CD4-positive, alpha-beta memory T cell (primary cell): ENCODE measurements at regions of chr1 and their contacts with region 1.

Region 1: GRCh38 chr1:158998781-158999161 is 10.9 kb upstream of the IFI16 start:
- DNase-seq: peak; percentile 63 to 72 (median 71)
- H3K4me3 ChIP-seq: no peak overlapping the region
- H3K4me3 Mint-ChIP-seq: peak overlapping the region in 7 of 8 donors; percentile 64 to 89 (median 76)
- H3K27ac ChIP-seq: no peak overlapping the region
- H3K27ac Mint-ChIP-seq: peak overlapping the region in 5 of 7 donors; percentile 24 to 93 (median 93)
- H3K4me1 ChIP-seq: peaks cover 33% of the 10 kb centered on the region
- H3K4me1 Mint-ChIP-seq: peaks cover 32 to 42% (median 37%) of the 10 kb centered on the region in 4 donors
- H3K27me3 ChIP-seq: no peaks in the 10 kb centered on the region
- H3K27me3 Mint-ChIP-seq: no peaks in the 10 kb centered on the region

Region 2: GRCh38 chr1:158506369-158506987 is 492.3 kb before region 1 on chr1:
- CTCF ChIA-PET with region 1: interaction called, 6 read pairs
- POLR2A ChIA-PET with region 1: no interaction called
- intact Hi-C with region 1: loop called (anchors 1 kb)
- DNase-seq: peak in 4 of 5 donors; percentile 18 to 35 (median 24)
- H3K4me3 ChIP-seq: no peak overlapping the region
- H3K4me3 Mint-ChIP-seq: no peak overlapping the region
- H3K27ac ChIP-seq: no peak overlapping the region
- H3K27ac Mint-ChIP-seq: no peak overlapping the region
- H3K4me1 ChIP-seq: no peaks in the 10 kb centered on the region
- H3K4me1 Mint-ChIP-seq: no peaks in the 10 kb centered on the region
- H3K27me3 ChIP-seq: no peaks in the 10 kb centered on the region
- H3K27me3 Mint-ChIP-seq: peaks cover 11 to 32% of the 10 kb centered on the region in 2 donors

Region 3: GRCh38 chr1:158675563-158676323 is 323.0 kb before region 1 on chr1:
- CTCF ChIA-PET with region 1: no interaction called
- POLR2A ChIA-PET with region 1: no interaction called
- intact Hi-C with region 1: no loop called
- DNase-seq: no peak
- H3K4me3 ChIP-seq: no peak overlapping the region
- H3K4me3 Mint-ChIP-seq: no peak overlapping the region
- H3K27ac ChIP-seq: no peak overlapping the region
- H3K27ac Mint-ChIP-seq: peak overlapping the region in 1 of 7 donors; percentile 9
- H3K4me1 ChIP-seq: peaks cover 3% of the 10 kb centered on the region
- H3K4me1 Mint-ChIP-seq: peaks cover 0 to 1% (median 0%) of the 10 kb centered on the region in 4 donors
- H3K27me3 ChIP-seq: no peaks in the 10 kb centered on the region
- H3K27me3 Mint-ChIP-seq: peaks cover 8 to 15% of the 10 kb centered on the region in 2 donors

Region 4: GRCh38 chr1:158793604-158794003 is 205.2 kb before region 1 on chr1:
- CTCF ChIA-PET with region 1: interaction called, 38 read pairs
- POLR2A ChIA-PET with region 1: no interaction called
- intact Hi-C with region 1: loop called (anchors 1 kb)
- DNase-seq: peak in 4 of 5 donors; percentile 26 to 39 (median 33)
- H3K4me3 ChIP-seq: no peak overlapping the region
- H3K4me3 Mint-ChIP-seq: no peak overlapping the region
- H3K27ac ChIP-seq: no peak overlapping the region
- H3K27ac Mint-ChIP-seq: peak overlapping the region in 1 of 7 donors; percentile 37
- H3K4me1 ChIP-seq: no peaks in the 10 kb centered on the region
- H3K4me1 Mint-ChIP-seq: no peaks in the 10 kb centered on the region
- H3K27me3 ChIP-seq: no peaks in the 10 kb centered on the region
- H3K27me3 Mint-ChIP-seq: peaks cover 0 to 3% of the 10 kb centered on the region in 2 donors

Region 5: DNA sequence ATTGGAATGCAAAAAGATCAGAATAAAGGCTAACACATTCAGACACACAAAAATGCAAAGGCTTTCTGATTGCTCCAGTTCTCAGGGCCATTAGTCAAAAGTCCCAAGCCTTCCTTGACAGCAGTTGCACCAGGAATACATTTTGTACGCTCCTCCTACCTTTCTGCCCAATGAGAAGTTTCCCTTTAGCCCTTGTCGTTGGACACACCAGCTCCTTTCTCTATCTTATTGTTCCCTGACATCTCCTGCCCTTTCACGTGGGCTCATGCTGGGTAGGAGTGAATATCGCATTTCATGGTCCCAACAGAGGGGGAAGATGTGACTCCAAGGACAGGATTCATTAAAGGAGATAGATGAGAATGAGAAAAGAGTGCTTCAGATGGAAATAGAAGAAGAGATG is 22.6 kb before region 1 on chr1:
- CTCF ChIA-PET with region 1: interaction called, 11 read pairs
- POLR2A ChIA-PET with region 1: no interaction called
- intact Hi-C with region 1: no loop called
- DNase-seq: no peak
- H3K4me3 ChIP-seq: no peak overlapping the region
- H3K4me3 Mint-ChIP-seq: no peak overlapping the region
- H3K27ac ChIP-seq: no peak overlapping the region
- H3K27ac Mint-ChIP-seq: peak overlapping the region in 2 of 7 donors; percentile 17 to 92
- H3K4me1 ChIP-seq: no peaks in the 10 kb centered on the region
- H3K4me1 Mint-ChIP-seq: peaks cover 4 to 17% (median 12%) of the 10 kb centered on the region in 4 donors
- H3K27me3 ChIP-seq: no peaks in the 10 kb centered on the region
- H3K27me3 Mint-ChIP-seq: no peaks in the 10 kb centered on the region

Region 6: GRCh38 chr1:159077120-159077961 is 78.6 kb after region 1 on chr1:
- CTCF ChIA-PET with region 1: interaction called, 22 read pairs
- POLR2A ChIA-PET with region 1: interaction called, 3 read pairs
- intact Hi-C with region 1: loop called (anchors 2 kb)
- DNase-seq: peak; percentile 86 to 95 (median 88)
- H3K4me3 ChIP-seq: peak overlapping the region; percentile 61 to 69
- H3K4me3 Mint-ChIP-seq: peak overlapping the region; percentile 75 to 86 (median 84)
- H3K27ac ChIP-seq: peak overlapping the region; percentile 85
- H3K27ac Mint-ChIP-seq: peak overlapping the region; percentile 89 to 99 (median 95)
- H3K4me1 ChIP-seq: peaks cover 47% of the 10 kb centered on the region
- H3K4me1 Mint-ChIP-seq: peaks cover 23 to 40% (median 27%) of the 10 kb centered on the region in 4 donors
- H3K27me3 ChIP-seq: no peaks in the 10 kb centered on the region
- H3K27me3 Mint-ChIP-seq: no peaks in the 10 kb centered on the region